Stomach (tissue), 19 donors: ENCODE measurements at regions of chr3 and their contacts with region 1.

Region 1: DNA sequence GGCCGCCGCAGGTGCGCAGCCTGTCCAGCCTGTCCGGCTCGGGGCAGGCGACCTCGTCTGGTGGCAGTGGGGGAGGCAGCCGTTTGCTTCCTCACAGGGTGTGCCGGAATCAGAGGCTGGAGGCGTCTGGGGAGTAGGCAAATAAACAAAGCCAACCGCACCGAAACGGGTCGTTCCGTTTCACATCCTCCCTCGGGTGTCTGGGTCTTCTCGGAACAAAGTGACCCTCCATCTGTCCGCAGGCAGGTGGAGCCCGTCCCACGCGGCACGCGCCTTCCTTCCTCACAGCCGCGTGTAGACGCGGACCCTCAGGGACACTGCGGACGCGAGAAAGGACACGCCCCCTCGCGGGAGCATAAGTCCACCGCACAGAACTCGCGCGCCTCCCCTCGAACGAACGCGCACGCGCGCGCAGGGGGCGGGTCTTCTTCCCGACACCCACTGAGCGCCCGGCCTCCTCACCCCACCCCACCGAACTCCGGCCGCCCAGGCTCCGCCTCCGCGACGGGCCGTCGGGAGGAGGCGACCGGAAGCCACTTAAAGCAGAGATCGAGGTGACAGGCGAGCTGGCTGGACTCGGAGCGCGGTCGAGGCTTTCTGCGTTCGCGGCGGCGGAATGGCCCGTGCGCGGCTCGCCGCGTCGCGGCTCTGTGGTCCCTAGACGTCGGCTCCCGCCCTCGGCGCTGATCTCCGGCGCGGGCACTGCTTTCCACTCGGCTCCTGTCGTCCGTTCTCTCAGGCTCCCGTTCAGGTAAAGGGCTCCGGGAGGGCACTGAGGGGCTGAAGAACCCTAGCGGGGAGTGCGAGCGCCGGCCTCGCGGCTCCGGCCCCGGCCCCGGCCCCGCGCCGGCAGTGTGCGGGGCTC is at the start of gene TIPARP:
- DNase-seq: peak; percentile 100
- H3K4me3 ChIP-seq: peak within 1 kb of the TSS; percentile 69 to 95 (median 84)
- H3K27ac ChIP-seq: peak within 1 kb of the TSS; percentile 91 to 98 (median 96)
- H3K4me1 ChIP-seq: peaks cover 0 to 46% (median 21%) of the 10 kb centered on the region in 4 donors
- H3K27me3 ChIP-seq: no peaks in the 10 kb centered on the region
- CTCF ChIP-seq: peak in 6 of 7 experiments; percentile 6 to 92 (median 68)
- EP300 ChIP-seq: peak; percentile 11
- POLR2A ChIP-seq: peak in 2 of 4 donors; percentile 94 to 98
- total RNA-seq, gene TIPARP: 7.2 to 73.4 (median 40.6) TPM

Region 2: DNA sequence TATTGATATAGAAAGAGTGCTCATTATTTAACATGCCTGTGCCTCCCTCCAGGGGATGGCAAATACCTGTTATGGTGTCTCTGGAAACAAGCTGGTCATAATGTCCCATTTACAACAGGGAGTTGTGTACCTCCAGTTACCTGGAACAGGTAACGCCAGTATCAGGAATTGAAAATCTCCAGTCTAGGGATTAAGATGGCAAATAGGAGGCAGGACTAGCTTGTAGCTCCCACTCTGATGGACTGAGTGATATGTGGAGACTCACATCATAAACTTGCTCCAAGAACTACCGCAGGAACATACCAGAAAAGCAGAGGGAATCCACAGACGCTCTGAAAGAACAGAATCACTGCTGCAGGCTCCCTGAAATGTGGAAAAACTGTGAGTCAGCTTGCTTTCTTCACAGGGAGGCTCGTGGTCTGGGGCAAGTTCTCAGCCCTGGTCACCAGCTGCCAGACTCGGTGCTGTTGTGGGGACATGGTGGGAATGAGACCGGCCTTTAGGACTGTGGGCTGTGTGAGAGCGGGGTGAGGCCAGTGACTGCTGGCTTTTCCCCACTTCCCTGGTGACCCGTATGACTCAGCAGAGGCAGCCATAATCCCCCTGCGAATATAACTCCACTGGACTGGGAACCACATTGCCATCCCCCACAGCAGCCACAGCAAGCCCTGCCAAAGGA is 456.5 kb before region 1 on chr3:
- intact Hi-C with region 1: no loop called
- DNase-seq: no peak
- H3K4me3 ChIP-seq: no peak overlapping the region
- H3K27ac ChIP-seq: no peak overlapping the region
- H3K4me1 ChIP-seq: no peaks in the 10 kb centered on the region
- H3K27me3 ChIP-seq: peaks cover 0 to 11% (median 0%) of the 10 kb centered on the region in 3 donors
- CTCF ChIP-seq: no peak
- EP300 ChIP-seq: no peak
- POLR2A ChIP-seq: no peak

Region 3: GRCh38 chr3:156547637-156548036 is 126.6 kb before region 1 on chr3:
- intact Hi-C with region 1: loop called (anchors 10 kb)
- DNase-seq: no peak
- H3K4me3 ChIP-seq: no peak overlapping the region
- H3K27ac ChIP-seq: peak overlapping the region in 1 of 5 donors; percentile 40
- H3K4me1 ChIP-seq: peaks cover 4 to 75% (median 42%) of the 10 kb centered on the region in 4 donors
- H3K27me3 ChIP-seq: no peaks in the 10 kb centered on the region
- CTCF ChIP-seq: no peak
- EP300 ChIP-seq: no peak
- POLR2A ChIP-seq: no peak

Region 4: DNA sequence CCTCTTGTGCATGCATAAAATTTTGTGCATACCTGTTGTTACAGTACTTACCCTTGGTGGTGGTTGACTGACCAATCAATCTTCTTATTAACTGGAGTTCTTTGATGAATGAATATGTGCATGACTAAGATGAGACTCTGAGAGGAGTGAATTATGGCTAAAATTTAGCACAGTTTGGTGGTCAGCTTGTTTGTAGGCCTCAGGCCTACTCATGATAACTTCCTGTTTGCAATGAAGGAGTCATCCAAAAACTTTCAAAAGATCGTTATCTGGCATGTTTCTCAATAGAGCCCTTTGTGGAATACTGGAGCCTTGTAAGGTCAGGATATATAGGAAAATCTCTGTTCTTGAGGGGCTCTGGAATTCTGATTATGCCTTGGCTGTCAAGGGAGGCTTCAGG is 218.4 kb after region 1 on chr3:
- intact Hi-C with region 1: no loop called
- DNase-seq: no peak
- H3K4me3 ChIP-seq: no peak overlapping the region
- H3K27ac ChIP-seq: no peak overlapping the region
- H3K4me1 ChIP-seq: peaks cover 0 to 4% (median 0%) of the 10 kb centered on the region in 4 donors
- H3K27me3 ChIP-seq: no peaks in the 10 kb centered on the region
- CTCF ChIP-seq: no peak
- EP300 ChIP-seq: no peak
- POLR2A ChIP-seq: no peak